Activated CD8-positive, alpha-beta T cell treated with anti-CD3 and anti-CD28 coated beads for 36 hours (primary cell): ENCODE measurements at regions of chr3 and their contacts with region 1.

Region 1: GRCh38 chr3:100073899-100074307 is 40.4 kb downstream of the FILIP1L start:
- DNase-seq: peak; percentile 48
- ATAC-seq: peak; percentile 31
- H3K4me3 Mint-ChIP-seq: peak overlapping the region; percentile 62
- H3K27ac Mint-ChIP-seq: peak overlapping the region; percentile 93
- H3K4me1 Mint-ChIP-seq: peaks cover 59% of the 10 kb centered on the region
- H3K27me3 Mint-ChIP-seq: no peaks in the 10 kb centered on the region
- CTCF ChIP-seq: no peak

Region 2: GRCh38 chr3:99833617-99834205 is 240.2 kb before region 1 on chr3:
- CTCF ChIA-PET with region 1: interaction called, 5 read pairs
- POLR2A ChIA-PET with region 1: interaction called, 3 read pairs
- intact Hi-C with region 1: loop called (anchors 10 kb)
- DNase-seq: no peak
- ATAC-seq: no peak
- H3K4me3 Mint-ChIP-seq: no peak overlapping the region
- H3K27ac Mint-ChIP-seq: no peak overlapping the region
- H3K4me1 Mint-ChIP-seq: peaks cover 15% of the 10 kb centered on the region
- H3K27me3 Mint-ChIP-seq: no peaks in the 10 kb centered on the region
- CTCF ChIP-seq: no peak

Region 3: DNA sequence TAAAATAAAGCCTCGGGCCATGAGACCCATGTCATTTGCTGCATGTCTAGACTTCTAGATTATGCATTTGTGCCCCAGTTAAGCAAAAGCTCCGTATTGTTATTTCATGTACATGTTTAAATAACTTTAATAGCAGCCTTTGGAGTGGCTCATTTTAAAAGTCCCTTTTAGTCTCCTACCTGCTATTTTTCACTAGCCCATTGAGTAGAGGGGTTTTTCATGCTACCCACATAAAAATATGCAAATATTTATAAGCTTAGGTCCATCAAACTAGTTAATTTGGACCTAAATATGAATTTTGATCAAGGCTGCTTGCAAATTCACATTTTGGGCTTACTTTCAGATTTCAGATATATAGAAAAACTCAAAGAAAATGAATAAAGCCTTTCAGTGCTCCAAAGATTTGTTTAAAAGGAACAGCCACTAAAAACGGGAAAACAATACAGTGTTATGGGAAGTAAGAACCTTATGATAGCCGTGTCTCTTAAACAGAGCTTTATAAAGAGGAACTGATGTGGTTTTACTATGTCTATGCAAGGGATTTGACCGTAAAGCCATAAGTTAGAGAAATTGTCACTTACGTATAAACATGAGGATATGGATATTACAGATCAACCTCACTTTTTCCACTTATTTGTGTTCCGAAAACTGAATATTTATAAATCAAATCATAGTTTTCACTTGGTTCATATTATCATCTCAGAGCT is 10.3 kb after region 1 on chr3:
- CTCF ChIA-PET with region 1: interaction called, 41 read pairs
- POLR2A ChIA-PET with region 1: interaction called, 4 read pairs
- intact Hi-C with region 1: loop called (anchors 1 kb)
- DNase-seq: no peak
- ATAC-seq: no peak
- H3K4me3 Mint-ChIP-seq: no peak overlapping the region
- H3K27ac Mint-ChIP-seq: no peak overlapping the region
- H3K4me1 Mint-ChIP-seq: peaks cover 18% of the 10 kb centered on the region
- H3K27me3 Mint-ChIP-seq: no peaks in the 10 kb centered on the region
- CTCF ChIP-seq: no peak

Region 4: GRCh38 chr3:100089812-100090668 is 16.1 kb after region 1 on chr3:
- CTCF ChIA-PET with region 1: interaction called, 41 read pairs
- POLR2A ChIA-PET with region 1: interaction called, 4 read pairs
- intact Hi-C with region 1: loop called (anchors 1 kb)
- DNase-seq: peak; percentile 57
- ATAC-seq: peak; percentile 88
- H3K4me3 Mint-ChIP-seq: no peak overlapping the region
- H3K27ac Mint-ChIP-seq: peak overlapping the region; percentile 22
- H3K4me1 Mint-ChIP-seq: peaks cover 29% of the 10 kb centered on the region
- H3K27me3 Mint-ChIP-seq: no peaks in the 10 kb centered on the region
- CTCF ChIP-seq: peak; percentile 54

Region 5: GRCh38 chr3:100254168-100254777 is 180.4 kb after region 1 on chr3:
- CTCF ChIA-PET with region 1: interaction called, 85 read pairs
- POLR2A ChIA-PET with region 1: interaction called, 7 read pairs
- intact Hi-C with region 1: no loop called
- DNase-seq: peak; percentile 67
- ATAC-seq: peak; percentile 83
- H3K4me3 Mint-ChIP-seq: no peak overlapping the region
- H3K27ac Mint-ChIP-seq: no peak overlapping the region
- H3K4me1 Mint-ChIP-seq: peaks cover 13% of the 10 kb centered on the region
- H3K27me3 Mint-ChIP-seq: no peaks in the 10 kb centered on the region
- CTCF ChIP-seq: peak; percentile 78